ENCODE measurements at regions of chr1 and their contacts with region 1.

Region 1: GRCh38 chr1:89762779-89763648 is 57.8 kb upstream of the LRRC8D start:
- DNase-seq: peak; percentile 80 to 93 (median 88)
- ATAC-seq: peak; percentile 100
- H3K4me3 ChIP-seq: peak overlapping the region; percentile 54 to 59
- H3K4me3 Mint-ChIP-seq: peak overlapping the region; percentile 89
- H3K27ac ChIP-seq: peak overlapping the region; percentile 27 to 46
- H3K27ac Mint-ChIP-seq: peak overlapping the region; percentile 91
- H3K4me1 ChIP-seq: peaks cover 38% of the 10 kb centered on the region
- H3K4me1 Mint-ChIP-seq: peaks cover 50% of the 10 kb centered on the region
- H3K27me3 ChIP-seq: no peaks in the 10 kb centered on the region
- H3K27me3 Mint-ChIP-seq: no peaks in the 10 kb centered on the region
- CTCF ChIP-seq: peak; percentile 84

Region 2: GRCh38 chr1:88983791-88984559 is 779.0 kb before region 1 on chr1:
- CTCF ChIA-PET with region 1: no interaction called
- POLR2A ChIA-PET with region 1: no interaction called
- intact Hi-C with region 1: loop called in 1 of 2 experiments (anchors 10 kb)
- DNase-seq: peak in 4 of 9 experiments; percentile 23 to 83 (median 61)
- ATAC-seq: peak; percentile 85
- H3K4me3 ChIP-seq: no peak overlapping the region
- H3K4me3 Mint-ChIP-seq: peak overlapping the region; percentile 47
- H3K27ac ChIP-seq: peak overlapping the region in 1 of 2 experiments; percentile 38
- H3K27ac Mint-ChIP-seq: peak overlapping the region; percentile 52
- H3K4me1 ChIP-seq: peaks cover 15% of the 10 kb centered on the region
- H3K4me1 Mint-ChIP-seq: peaks cover 62% of the 10 kb centered on the region
- H3K27me3 ChIP-seq: no peaks in the 10 kb centered on the region
- H3K27me3 Mint-ChIP-seq: no peaks in the 10 kb centered on the region
- CTCF ChIP-seq: peak; percentile 69

Region 3: DNA sequence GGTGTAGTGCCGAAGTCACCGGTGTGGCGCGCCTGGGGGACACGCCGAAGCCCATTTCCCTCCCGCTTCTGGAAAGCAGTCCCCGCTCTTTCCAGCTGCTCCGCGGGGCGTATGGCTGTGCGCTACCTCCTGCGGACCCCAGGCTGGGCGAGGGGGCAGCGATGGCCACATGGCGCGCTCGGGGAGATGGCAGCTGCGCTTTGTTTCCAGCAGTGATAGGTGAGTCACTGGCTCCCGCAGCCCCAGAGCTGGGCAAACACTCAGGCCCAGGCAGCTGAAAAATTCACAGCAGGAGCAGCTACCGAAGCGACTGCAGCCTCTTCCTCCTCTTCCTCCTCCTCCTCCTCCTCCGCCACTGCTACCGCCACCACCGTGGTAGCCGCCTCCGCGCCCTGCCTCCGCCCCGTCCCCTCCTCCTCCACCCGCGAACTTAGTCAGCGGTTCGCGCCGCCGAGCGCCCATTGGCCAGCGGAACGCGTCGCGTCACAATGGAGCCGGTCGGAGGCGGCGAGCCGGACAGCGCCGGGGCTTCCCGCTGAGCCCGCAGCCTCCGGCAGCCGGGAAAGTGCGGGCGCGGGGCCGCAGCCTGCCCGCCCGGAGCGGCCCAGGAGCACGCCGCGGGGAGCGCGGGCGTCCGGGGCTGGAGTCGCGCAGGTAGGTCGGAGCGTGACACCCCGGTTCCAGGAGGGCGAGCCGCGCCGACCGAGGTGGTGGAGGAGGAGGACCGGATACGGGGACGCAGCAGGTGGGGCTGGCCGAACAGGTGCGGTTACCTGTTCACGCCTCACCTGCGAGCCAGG is 238.4 kb before region 1 on chr1 and contains the start of gene LRRC8B:
- CTCF ChIA-PET with region 1: interaction called, 23 read pairs
- POLR2A ChIA-PET with region 1: interaction called, 3 read pairs
- intact Hi-C with region 1: loop called (anchors 1 to 2 kb)
- DNase-seq: peak; percentile 73 to 94 (median 86)
- ATAC-seq: peak; percentile 80
- H3K4me3 ChIP-seq: peak within 1 kb of the TSS; percentile 92 to 98
- H3K4me3 Mint-ChIP-seq: no peak within 1 kb of the TSS
- H3K27ac ChIP-seq: peak within 1 kb of the TSS; percentile 81 to 91
- H3K27ac Mint-ChIP-seq: peak within 1 kb of the TSS; percentile 90
- H3K4me1 ChIP-seq: peaks cover 38% of the 10 kb centered on the region
- H3K4me1 Mint-ChIP-seq: peaks cover 25% of the 10 kb centered on the region
- H3K27me3 ChIP-seq: no peaks in the 10 kb centered on the region
- H3K27me3 Mint-ChIP-seq: no peaks in the 10 kb centered on the region
- CTCF ChIP-seq: no peak
- total RNA-seq, gene LRRC8B: 11.8 to 14.5 TPM

Region 4: DNA sequence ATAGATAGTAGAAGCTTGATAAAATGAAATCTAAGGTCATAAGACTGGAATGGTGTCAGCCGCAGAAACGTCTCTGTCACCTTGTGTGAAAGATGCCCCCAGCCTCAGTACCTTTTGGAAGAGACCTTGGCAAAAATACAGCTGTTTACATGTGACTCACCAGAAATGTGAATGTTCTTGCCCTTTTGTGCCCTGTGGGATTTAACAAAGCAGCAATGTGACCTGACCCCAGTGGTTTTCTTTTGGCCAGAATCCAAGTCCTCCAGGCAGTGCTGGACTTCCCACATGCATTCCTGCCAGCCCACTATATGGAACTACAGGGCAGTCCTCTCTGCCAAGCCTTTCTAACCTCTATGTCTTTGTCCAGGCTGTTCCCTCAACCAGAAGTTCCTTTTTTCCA is 157.3 kb before region 1 on chr1:
- CTCF ChIA-PET with region 1: interaction called, 78 read pairs
- POLR2A ChIA-PET with region 1: interaction called, 21 read pairs
- intact Hi-C with region 1: loop called in 1 of 2 experiments (anchors 2 kb)
- DNase-seq: no peak
- ATAC-seq: no peak
- H3K4me3 ChIP-seq: no peak overlapping the region
- H3K4me3 Mint-ChIP-seq: peak overlapping the region; percentile 46
- H3K27ac ChIP-seq: peak overlapping the region in 1 of 2 experiments; percentile 73
- H3K27ac Mint-ChIP-seq: peak overlapping the region; percentile 100
- H3K4me1 ChIP-seq: peaks cover 94% of the 10 kb centered on the region
- H3K4me1 Mint-ChIP-seq: peaks cover 92% of the 10 kb centered on the region
- H3K27me3 ChIP-seq: no peaks in the 10 kb centered on the region
- H3K27me3 Mint-ChIP-seq: no peaks in the 10 kb centered on the region
- CTCF ChIP-seq: no peak

Region 5: GRCh38 chr1:89657886-89658285 is 105.1 kb before region 1 on chr1:
- CTCF ChIA-PET with region 1: interaction called, 41 read pairs
- POLR2A ChIA-PET with region 1: interaction called, 12 read pairs
- intact Hi-C with region 1: no loop called
- DNase-seq: peak in 3 of 9 experiments; percentile 47 to 87 (median 75)
- ATAC-seq: peak; percentile 74
- H3K4me3 ChIP-seq: no peak overlapping the region
- H3K4me3 Mint-ChIP-seq: peak overlapping the region; percentile 51
- H3K27ac ChIP-seq: peak overlapping the region; percentile 21 to 58
- H3K27ac Mint-ChIP-seq: peak overlapping the region; percentile 88
- H3K4me1 ChIP-seq: peaks cover 73% of the 10 kb centered on the region
- H3K4me1 Mint-ChIP-seq: peaks cover 92% of the 10 kb centered on the region
- H3K27me3 ChIP-seq: no peaks in the 10 kb centered on the region
- H3K27me3 Mint-ChIP-seq: no peaks in the 10 kb centered on the region
- CTCF ChIP-seq: no peak

Region 6: GRCh38 chr1:89719502-89720306 is 43.3 kb before region 1 on chr1:
- CTCF ChIA-PET with region 1: interaction called, 36 read pairs
- POLR2A ChIA-PET with region 1: interaction called, 8 read pairs
- intact Hi-C with region 1: loop called (anchors 1 to 5 kb)
- DNase-seq: peak in 2 of 9 experiments; percentile 42 to 67
- ATAC-seq: peak; percentile 68
- H3K4me3 ChIP-seq: no peak overlapping the region
- H3K4me3 Mint-ChIP-seq: peak overlapping the region; percentile 22
- H3K27ac ChIP-seq: peak overlapping the region in 1 of 2 experiments; percentile 65
- H3K27ac Mint-ChIP-seq: peak overlapping the region; percentile 91
- H3K4me1 ChIP-seq: peaks cover 63% of the 10 kb centered on the region
- H3K4me1 Mint-ChIP-seq: peaks cover 80% of the 10 kb centered on the region
- H3K27me3 ChIP-seq: no peaks in the 10 kb centered on the region
- H3K27me3 Mint-ChIP-seq: no peaks in the 10 kb centered on the region
- CTCF ChIP-seq: no peak